ENCODE measurements at regions of chr2 and their contacts with region 1.

Region 1: DNA sequence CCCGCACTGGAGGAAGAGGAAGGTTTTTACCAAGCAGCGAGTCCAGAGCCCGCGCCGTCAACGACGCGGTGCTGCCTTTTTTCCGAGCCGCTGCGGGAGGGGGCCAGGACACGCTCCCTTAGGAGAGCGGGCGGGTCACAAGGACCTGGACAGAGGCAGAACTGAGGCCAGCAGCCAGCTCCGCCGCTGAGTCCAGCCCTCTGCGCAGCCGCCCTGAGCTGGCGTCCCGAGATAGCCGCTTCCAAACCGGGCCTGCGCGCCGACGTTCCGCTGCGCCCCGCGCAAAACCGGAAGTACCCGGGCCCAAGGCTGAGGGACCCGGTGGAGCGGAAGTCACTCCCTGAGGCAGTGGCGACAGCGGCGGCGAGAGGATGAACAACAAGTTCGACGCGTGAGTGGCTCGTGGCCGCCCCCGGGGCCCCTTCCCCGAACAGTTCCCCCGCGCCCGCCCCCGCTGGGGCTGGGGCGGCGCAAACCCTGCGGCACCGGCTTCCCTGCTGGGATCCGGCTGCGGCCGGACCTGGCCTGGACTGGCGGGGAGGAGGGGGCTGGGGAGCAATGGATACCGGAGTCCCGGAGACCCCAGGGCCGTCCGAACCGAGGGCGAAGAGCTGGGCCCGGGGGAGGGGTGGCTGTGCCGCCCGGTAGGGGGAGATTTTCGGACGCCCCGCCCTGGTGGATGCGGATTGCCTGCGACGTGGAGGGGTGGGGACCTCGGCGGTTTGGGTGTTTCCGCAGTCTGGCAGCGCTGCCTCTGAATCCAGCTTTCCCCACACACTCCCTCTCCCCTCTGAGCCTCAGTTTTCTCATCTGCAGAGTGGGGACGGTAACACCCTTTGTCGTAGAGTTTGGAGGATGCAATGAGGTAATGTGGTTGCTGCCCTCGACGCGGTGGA is at the starts of genes EIF4E2 and TIGD1:
- DNase-seq: peak; percentile 96
- H3K4me3 ChIP-seq: peak within 1 kb of the TSS; percentile 93
- H3K27ac ChIP-seq: peak within 1 kb of the TSS; percentile 84
- H3K4me1 ChIP-seq: peaks cover 19% of the 10 kb centered on the region
- CTCF ChIP-seq: peak; percentile 54; the same call in 1 of the 2 replicates
- total RNA-seq, gene EIF4E2: 59.9 and 61.6 TPM in 2 replicates
- total RNA-seq, gene TIGD1: 21.0 and 27.8 TPM in 2 replicates

Region 2: GRCh38 chr2:231684314-231685223 is 866.0 kb before region 1 on chr2:
- CTCF ChIA-PET with region 1: no interaction called
- POLR2A ChIA-PET with region 1: no interaction called
- intact Hi-C with region 1: no loop called
- DNase-seq: peak; percentile 55
- H3K4me3 ChIP-seq: peak overlapping the region; percentile 68
- H3K27ac ChIP-seq: peak overlapping the region; percentile 71
- H3K4me1 ChIP-seq: peaks cover 87% of the 10 kb centered on the region
- CTCF ChIP-seq: no peak

Region 3: GRCh38 chr2:231961349-231962166 is 589.0 kb before region 1 on chr2 and contains the start of gene DIS3L2:
- CTCF ChIA-PET with region 1: no interaction called
- POLR2A ChIA-PET with region 1: no interaction called
- intact Hi-C with region 1: loop called (anchors 5 kb)
- DNase-seq: peak; percentile 86
- H3K4me3 ChIP-seq: peak within 1 kb of the TSS; percentile 74
- H3K27ac ChIP-seq: peak within 1 kb of the TSS; percentile 44
- H3K4me1 ChIP-seq: peaks cover 18% of the 10 kb centered on the region
- CTCF ChIP-seq: peak; percentile 28; the same call in 1 of the 2 replicates
- total RNA-seq, gene DIS3L2: 20.6 and 20.7 TPM in 2 replicates

Region 4: DNA sequence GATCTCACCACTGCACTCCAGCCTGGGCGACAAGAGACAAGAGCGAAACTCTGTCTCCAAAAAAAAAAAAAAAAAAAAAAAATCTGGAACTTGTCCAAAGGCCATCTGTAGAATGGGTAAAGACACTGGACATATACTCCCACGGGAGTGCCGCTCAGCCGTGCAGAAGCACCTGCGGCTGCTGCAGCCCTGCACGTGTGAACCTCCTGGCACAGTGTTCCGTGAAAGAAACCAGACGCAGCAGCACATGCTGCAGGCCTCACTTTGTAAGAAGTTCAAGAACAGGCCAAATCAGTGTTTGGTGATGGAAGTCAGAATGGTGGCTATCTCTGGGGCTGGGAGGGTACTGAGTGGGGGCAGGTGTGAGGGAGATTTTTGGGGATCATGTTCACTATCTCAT is 18.2 kb before region 1 on chr2:
- CTCF ChIA-PET with region 1: no interaction called
- POLR2A ChIA-PET with region 1: interaction called, 10 read pairs
- intact Hi-C with region 1: no loop called
- DNase-seq: peak; percentile 84
- H3K4me3 ChIP-seq: no peak overlapping the region
- H3K27ac ChIP-seq: peak overlapping the region; percentile 53
- H3K4me1 ChIP-seq: peaks cover 49% of the 10 kb centered on the region
- CTCF ChIP-seq: no peak

Region 5: DNA sequence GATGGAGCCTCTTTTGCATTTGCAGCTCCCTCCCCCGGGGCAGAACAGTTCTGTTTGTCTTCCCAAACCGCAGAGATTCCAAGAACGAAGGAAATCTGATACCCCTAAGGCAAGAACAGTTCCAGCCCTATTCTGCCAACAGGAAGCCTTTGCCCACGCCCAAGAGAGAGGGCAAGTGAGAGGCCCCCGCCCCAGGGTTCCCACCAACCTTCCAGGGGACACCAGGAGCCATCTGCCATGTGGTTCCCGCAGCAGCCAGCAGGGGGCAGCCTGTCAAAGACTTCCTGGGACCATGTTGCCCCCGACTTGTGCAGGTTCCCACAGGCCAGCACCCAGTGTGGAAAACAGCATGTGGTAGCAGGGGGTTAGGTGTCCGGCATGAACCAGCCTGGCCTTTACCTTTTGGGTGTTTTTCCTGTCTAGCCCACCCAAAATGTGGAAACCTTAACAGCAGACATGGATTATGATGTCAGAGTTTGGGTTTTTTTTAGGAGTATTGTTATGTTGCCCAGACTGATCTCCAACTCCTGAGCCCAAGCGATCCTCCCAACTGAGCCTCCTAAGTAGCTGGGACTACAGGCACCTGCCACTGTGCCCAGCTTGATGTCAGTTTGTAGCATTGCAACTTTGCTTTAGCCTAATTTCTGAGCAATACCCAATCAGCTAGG is 61.1 kb after region 1 on chr2:
- CTCF ChIA-PET with region 1: no interaction called
- POLR2A ChIA-PET with region 1: no interaction called
- intact Hi-C with region 1: no loop called
- DNase-seq: peak; percentile 55
- H3K4me3 ChIP-seq: no peak overlapping the region
- H3K27ac ChIP-seq: no peak overlapping the region
- H3K4me1 ChIP-seq: no peaks in the 10 kb centered on the region
- CTCF ChIP-seq: peak; percentile 91

Region 6: GRCh38 chr2:232981381-232982360 is 431.1 kb after region 1 on chr2:
- CTCF ChIA-PET with region 1: no interaction called
- POLR2A ChIA-PET with region 1: no interaction called
- intact Hi-C with region 1: no loop called
- DNase-seq: no peak
- H3K4me3 ChIP-seq: no peak overlapping the region
- H3K27ac ChIP-seq: no peak overlapping the region
- H3K4me1 ChIP-seq: no peaks in the 10 kb centered on the region
- CTCF ChIP-seq: no peak

Region 7: DNA sequence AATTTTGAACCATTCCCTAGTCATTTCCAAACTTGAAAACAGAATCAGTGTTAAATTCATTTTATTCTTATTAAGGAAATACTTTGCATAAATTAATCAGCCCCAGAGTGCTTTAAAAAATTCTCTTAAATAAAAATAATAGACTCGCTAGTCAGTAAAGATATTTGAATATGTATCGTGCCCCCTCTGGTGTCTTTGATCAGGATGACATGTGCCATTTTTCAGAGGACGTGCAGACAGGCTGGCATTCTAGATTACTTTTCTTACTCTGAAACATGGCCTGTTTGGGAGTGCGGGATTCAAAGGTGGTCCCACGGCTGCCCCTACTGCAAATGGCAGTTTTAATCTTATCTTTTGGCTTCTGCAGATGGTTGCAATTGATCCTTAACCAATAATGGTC is 1222.0 kb after region 1 on chr2:
- CTCF ChIA-PET with region 1: no interaction called
- POLR2A ChIA-PET with region 1: no interaction called
- intact Hi-C with region 1: no loop called
- DNase-seq: no peak
- H3K4me3 ChIP-seq: no peak overlapping the region
- H3K27ac ChIP-seq: no peak overlapping the region
- H3K4me1 ChIP-seq: no peaks in the 10 kb centered on the region
- CTCF ChIP-seq: no peak